ENCODE measurements at regions of chr4 and their contacts with region 1.

Region 1: GRCh38 chr4:153521999-153522801 is 56.0 kb downstream of the TMEM131L start:
- DNase-seq: peak; percentile 90
- ATAC-seq: peak; percentile 87
- H3K4me3 Mint-ChIP-seq: peak overlapping the region; percentile 56
- H3K27ac Mint-ChIP-seq: peak overlapping the region; percentile 93
- H3K4me1 Mint-ChIP-seq: peaks cover 91% of the 10 kb centered on the region
- H3K27me3 Mint-ChIP-seq: no peaks in the 10 kb centered on the region

Region 2: DNA sequence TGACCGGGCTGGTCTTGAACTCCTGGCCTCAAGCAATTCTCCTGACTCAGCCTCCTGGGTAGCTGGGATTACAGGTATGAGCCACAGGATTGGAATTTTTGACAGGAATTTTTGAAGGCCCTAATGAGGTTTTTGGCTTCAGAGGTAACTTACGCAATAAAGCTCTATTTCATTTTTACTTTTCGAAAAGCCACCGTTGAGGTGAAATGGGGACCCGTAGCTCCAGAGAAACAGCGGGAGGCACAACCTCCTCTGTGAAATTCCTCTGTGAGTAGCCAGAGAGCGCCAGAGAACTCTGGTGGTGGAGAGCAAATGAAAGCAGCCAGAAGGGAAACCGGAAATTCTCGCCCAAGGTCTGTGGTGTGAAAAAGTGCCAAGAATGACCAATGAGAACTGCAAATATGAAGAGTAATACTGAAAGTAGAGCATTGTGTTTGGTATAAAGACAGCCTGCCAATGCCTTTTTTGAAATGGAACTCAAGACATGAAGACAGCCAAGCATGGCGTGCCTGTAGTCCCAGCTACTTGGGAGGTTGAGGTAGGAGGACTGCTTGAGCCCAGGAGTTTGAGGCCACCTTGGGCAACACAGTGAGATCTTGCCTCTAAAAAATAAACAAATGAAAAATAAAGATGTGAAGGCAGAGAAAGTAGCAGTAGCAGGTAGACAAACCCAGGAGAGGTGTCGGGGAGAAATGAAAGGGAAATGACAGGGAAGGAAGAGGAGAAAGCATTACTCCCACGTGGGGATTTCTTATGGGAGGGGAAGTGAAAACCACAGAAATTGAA is 89.0 kb before region 1 on chr4:
- CTCF ChIA-PET with region 1: interaction called, 12 read pairs
- DNase-seq: peak; percentile 93
- ATAC-seq: peak; percentile 93
- H3K4me3 Mint-ChIP-seq: peak overlapping the region; percentile 77
- H3K27ac Mint-ChIP-seq: peak overlapping the region; percentile 96
- H3K4me1 Mint-ChIP-seq: peaks cover 53% of the 10 kb centered on the region
- H3K27me3 Mint-ChIP-seq: peaks cover 6% of the 10 kb centered on the region

Region 3: DNA sequence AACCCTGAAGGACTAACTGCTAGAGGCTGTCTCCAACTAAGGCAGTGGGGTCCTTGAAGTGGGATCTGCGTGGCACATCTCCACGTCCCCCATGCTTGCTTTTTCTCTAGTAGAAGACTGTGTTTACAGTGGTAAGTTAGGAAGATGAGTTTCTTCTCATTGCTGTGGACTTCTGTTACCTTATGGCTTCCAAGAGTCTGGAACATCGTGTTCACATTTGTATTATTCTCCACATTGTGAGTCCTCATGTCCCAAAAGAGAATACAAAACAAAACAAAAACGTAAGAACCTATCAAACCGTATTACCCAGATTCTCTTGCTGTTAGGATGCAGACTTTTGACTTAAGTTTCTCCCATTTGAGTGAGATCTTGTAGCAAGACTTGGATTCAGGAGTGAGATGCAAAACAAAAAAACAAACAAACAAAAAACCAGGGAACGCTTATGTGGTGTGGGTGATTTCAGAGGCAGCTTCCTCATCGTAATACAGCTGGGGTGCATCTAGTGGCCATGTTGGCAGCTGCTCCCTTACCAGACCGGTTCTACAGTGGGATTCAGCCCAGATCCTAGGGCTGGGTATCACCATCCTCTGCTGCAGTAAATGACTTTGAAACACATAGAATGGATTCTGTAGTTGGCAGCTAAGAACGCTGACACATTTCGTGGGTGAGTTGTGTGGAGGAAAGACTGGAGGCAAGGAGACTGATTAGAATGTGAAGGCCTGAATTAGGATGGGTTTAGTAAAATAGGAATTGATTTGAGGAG is 14.7 kb before region 1 on chr4:
- CTCF ChIA-PET with region 1: no interaction called
- DNase-seq: no peak
- ATAC-seq: no peak
- H3K4me3 Mint-ChIP-seq: no peak overlapping the region
- H3K27ac Mint-ChIP-seq: no peak overlapping the region
- H3K4me1 Mint-ChIP-seq: peaks cover 16% of the 10 kb centered on the region
- H3K27me3 Mint-ChIP-seq: no peaks in the 10 kb centered on the region

Region 4: DNA sequence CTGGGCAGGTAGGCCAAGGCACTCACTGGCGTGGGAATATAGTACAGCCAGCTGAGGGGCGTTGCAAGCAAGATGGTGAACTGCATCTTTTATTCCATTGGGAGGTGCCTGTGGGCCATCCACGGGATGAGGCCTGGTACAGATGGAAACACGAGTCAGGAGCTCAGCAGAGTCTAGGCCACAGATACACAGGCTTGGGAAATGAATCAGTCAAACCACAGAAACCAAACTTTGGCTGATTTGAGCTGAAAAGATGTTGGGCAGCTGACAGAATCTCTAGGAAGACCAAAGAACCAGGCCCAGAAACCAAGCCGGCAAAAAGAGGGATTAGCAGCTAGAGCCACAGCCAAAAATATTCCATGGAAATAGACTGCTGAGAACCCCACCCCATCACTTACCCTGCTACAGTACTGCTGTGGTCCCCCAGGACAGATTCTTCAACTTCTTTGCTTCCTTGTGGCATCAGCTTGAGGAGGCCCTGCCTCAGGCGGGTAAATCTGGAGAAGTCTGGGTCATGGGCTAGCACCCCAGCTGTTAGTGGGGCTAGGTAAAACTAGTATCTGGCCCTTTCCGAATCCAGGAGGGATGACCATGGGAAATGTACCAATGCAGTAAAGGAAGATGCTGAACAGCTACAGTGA is 19.4 kb after region 1 on chr4:
- CTCF ChIA-PET with region 1: interaction called, 11 read pairs
- DNase-seq: peak; percentile 65
- ATAC-seq: peak; percentile 82
- H3K4me3 Mint-ChIP-seq: no peak overlapping the region
- H3K27ac Mint-ChIP-seq: no peak overlapping the region
- H3K4me1 Mint-ChIP-seq: peaks cover 28% of the 10 kb centered on the region
- H3K27me3 Mint-ChIP-seq: no peaks in the 10 kb centered on the region

Measured in activated CD8-positive, alpha-beta memory T cell treated with anti-CD3 and anti-CD28 coated beads, Interleukin-2, amount 10 ng/mL, durations not matched to agents 7 days and 5 days (primary cell).